GM10248 (cell line): ENCODE measurements at regions of chr10 and their contacts with region 1.

Region 1: GRCh38 chr10:111076191-111076681 is 593 bp upstream of the ADRA2A start:
- DNase-seq: peak; percentile 80
- CTCF ChIP-seq: peak; percentile 83

Region 2: DNA sequence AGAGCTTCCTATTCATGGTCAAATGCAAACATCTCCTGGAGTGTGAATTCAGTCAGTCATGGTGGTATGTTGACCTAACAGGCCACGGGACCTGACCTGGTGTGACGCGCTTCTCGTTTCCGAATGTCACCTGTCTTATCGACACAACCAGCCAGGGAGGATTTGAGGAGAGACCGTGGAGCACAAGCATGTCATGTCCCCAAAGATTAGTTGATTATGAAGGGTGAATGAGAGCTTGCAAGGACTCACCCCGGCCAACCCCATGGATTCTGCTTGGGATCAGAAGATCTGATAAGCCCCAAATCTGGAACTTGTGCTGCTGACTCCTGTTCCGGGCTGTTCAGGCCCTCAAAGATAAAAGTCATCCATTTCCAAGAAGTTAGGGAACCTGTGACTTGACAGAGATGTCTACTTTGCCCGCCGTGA is 11.1 kb after region 1 on chr10:
- CTCF ChIA-PET with region 1: interaction called, 13 read pairs
- POLR2A ChIA-PET with region 1: no interaction called
- DNase-seq: no peak
- CTCF ChIP-seq: no peak

Region 3: DNA sequence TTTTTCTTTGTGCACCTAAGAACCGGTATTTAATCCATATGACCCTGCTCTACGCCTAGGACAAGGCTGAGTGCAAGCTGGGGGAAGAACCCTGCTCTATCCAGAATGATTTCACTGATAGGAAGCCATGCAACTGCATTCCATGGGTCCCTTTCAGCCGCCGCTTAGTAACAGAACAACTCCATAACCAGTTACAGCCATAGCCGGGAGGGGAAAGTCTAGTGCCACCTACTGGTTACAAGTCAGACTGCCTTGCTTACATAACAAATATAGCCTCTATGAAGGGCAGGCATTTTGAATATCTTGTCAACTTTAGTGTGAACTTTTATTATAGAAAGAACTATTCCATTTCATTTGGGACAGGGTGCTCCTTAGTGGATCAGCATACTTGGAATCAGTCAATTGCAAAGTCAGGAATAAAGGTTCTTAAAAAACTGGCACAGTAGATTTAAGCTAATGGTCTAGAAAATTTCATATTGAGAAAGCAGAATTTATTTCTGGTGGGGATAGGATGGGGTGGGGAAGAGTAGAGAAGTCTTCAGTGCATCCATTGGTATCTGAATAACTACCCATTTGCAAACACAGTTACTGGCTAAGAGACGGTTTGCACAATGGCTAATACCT is 522.3 kb after region 1 on chr10:
- CTCF ChIA-PET with region 1: interaction called, 11 read pairs
- POLR2A ChIA-PET with region 1: no interaction called
- DNase-seq: peak; percentile 34
- CTCF ChIP-seq: peak; percentile 73